ENCODE measurements at regions of chr7 and their contacts with region 1.

Region 1: GRCh38 chr7:6658618-6659341 is 21.7 kb downstream of the ZNF316 start:
- DNase-seq: no peak
- H3K4me3 ChIP-seq: no peak overlapping the region
- H3K27ac ChIP-seq: no peak overlapping the region
- H3K4me1 ChIP-seq: peaks cover 0 to 10% of the 10 kb centered on the region in 2 donors
- H3K27me3 ChIP-seq: no peaks in the 10 kb centered on the region
- CTCF ChIP-seq: no peak
- POLR2A ChIP-seq: no peak

Region 2: DNA sequence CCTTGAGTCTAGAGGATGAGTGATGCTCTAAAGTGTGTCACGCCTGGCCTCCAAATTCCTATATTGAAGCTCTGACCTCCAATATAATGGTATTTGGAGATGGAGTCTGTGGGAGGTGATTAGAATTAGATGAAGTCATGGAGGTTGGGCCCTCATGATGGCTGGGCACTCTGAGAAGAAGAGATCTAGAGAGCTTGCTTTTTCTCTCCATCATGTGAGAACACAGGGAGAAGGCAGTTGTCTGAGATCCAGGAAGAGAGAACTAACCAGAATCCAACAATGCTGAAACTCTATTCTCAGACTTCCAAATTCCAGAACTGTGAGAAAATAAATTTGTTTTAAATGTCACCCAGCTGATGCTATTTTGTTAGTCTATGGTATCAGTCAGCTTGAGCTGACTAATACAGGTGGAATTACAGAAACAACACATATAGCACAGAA is 892.4 kb before region 1 on chr7:
- intact Hi-C with region 1: no loop called
- DNase-seq: no peak
- H3K4me3 ChIP-seq: no peak overlapping the region
- H3K27ac ChIP-seq: no peak overlapping the region
- H3K4me1 ChIP-seq: peaks cover 12 to 17% of the 10 kb centered on the region in 2 donors
- H3K27me3 ChIP-seq: no peaks in the 10 kb centered on the region
- CTCF ChIP-seq: no peak
- POLR2A ChIP-seq: no peak

Region 3: GRCh38 chr7:6706677-6707544 is 48.1 kb after region 1 on chr7 and contains the start of gene ZNF12:
- intact Hi-C with region 1: loop called (anchors 10 kb)
- DNase-seq: peak; percentile 97 to 98
- H3K4me3 ChIP-seq: peak within 1 kb of the TSS; percentile 81 to 98 (median 88)
- H3K27ac ChIP-seq: peak within 1 kb of the TSS; percentile 37 to 80 (median 61)
- H3K4me1 ChIP-seq: peaks cover 18 to 24% of the 10 kb centered on the region in 2 donors
- H3K27me3 ChIP-seq: no peaks in the 10 kb centered on the region
- CTCF ChIP-seq: no peak
- POLR2A ChIP-seq: peak in 1 of 2 donors; percentile 76
- total RNA-seq, gene ZNF12: 29.2 to 43.9 (median 31.4) TPM